MCF 10A (cell line): ENCODE measurements at regions of chr2 and their contacts with region 1.

Region 1: DNA sequence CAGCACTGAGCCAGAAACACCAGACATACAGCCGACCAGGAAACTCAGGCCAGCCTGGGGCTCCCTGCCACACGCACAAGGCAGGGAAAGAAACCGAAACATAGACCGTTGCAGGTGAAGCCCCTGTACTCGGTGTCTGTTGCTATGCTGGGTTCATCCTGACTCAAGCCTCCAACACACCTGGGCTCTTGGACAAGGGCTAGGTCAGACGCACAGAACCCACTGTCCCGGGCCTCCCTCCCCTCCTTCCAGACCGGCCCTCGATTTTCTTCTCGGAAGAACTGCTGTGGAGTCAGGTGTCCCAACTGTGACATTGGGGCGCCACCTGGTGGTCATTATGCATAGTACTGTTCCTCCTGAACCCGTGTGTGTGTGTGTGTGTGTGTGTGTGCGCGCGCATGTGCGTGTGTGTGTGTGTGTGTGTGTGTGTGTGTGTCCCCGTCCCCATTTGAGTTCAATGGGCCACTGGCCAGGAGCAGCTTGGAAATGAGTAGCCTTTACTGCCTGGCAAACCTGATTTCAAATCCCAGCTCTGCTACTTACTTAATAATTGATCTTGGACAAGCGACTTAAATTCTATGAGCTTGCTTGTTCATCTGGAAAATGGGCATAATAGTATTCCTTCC is 55.4 kb upstream of the GLI2 start:
- DNase-seq: peak; percentile 90
- H3K4me3 Mint-ChIP-seq: no peak overlapping the region
- H3K27ac Mint-ChIP-seq: no peak overlapping the region
- H3K4me1 Mint-ChIP-seq: peaks cover 10% of the 10 kb centered on the region
- H3K27me3 Mint-ChIP-seq: no peaks in the 10 kb centered on the region
- CTCF ChIP-seq: peak; percentile 65

Region 2: DNA sequence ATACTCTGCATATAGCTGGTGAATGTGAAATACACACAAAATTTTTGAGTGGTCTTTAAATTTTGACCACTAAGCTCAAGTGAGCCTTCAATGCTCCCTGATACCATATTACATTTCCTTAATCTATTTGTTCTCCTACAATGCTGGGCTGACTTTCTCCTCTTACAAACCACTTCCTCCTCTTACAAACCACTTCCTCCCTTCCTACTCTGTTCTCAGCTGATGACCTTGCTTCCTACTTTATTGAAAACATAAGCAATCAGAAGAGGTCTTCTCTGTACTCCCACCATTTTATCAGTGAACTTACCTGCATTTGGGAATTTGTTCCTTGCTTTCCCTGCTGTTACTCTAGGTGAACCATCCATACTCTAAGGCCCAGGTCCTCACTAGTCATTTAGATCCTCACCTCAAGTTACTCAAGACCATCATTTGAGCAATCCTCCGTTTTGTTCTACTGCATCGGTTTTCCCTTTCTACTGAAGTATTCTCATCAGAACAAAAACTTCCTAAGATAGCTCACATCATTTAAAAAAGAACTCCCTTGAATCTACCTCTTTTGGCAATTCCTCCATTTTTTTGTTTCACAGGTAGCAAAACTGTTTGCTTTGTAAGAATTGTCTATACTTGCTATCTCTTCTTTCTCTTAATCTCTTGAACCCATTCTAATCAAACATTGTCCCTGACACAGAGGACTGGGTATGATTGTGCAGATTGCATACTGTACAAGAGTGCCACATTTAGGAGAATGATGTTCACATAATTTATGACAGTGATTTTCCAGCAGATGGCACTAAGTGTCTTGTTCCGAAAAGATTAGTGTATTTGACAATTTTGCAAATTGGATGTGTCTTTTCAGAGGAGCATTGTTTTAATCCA is 570.8 kb before region 1 on chr2:
- CTCF ChIA-PET with region 1: interaction called, 10 read pairs
- POLR2A ChIA-PET with region 1: interaction called, 3 read pairs
- intact Hi-C with region 1: loop called (anchors 5 kb)
- DNase-seq: peak; percentile 65
- H3K4me3 Mint-ChIP-seq: peak overlapping the region; percentile 34
- H3K27ac Mint-ChIP-seq: peak overlapping the region; percentile 28
- H3K4me1 Mint-ChIP-seq: peaks cover 44% of the 10 kb centered on the region
- H3K27me3 Mint-ChIP-seq: no peaks in the 10 kb centered on the region
- CTCF ChIP-seq: peak; percentile 64

Region 3: DNA sequence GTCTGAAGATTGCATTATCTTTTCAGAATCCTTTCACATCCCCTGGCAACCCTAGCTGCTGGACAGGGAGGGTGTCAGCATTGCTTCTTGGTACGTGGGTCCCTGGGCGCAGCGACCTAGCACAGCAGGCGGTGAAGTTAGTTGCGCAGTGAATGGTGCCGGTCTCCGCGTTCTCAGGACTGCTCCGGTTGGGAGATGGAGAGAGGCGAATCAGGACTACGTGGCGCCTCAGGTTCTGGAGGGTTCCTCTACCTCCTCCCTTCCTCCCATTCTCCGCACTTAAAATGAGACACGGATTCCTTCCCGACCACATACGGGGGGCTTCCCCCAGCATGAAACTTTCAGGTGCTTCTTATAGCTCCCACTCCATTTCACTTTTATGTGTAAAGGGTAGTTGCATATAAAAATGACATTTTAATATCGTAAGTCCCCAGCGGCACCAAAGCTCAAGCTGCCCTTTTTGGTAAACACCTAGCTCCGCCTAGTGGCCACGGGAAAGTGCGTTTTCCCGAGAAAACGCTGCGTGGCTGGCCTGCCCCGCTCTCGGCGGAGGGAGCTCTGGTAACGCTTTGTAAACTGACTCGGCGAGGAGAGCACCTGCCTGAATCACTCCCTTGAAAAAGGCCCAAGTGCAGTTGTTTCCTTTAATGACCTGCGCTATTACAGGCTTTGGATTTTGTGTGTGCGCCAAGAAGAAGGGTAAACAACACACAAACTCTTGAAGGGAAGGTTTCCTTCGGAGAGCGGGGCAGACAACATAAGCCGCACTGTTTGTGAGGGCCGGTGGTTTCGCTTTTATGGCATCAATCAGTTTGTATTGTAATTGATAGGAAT is 367.2 kb before region 1 on chr2:
- CTCF ChIA-PET with region 1: interaction called, 121 read pairs
- POLR2A ChIA-PET with region 1: interaction called, 3 read pairs
- intact Hi-C with region 1: loop called (anchors 10 kb)
- DNase-seq: peak; percentile 78
- H3K4me3 Mint-ChIP-seq: peak overlapping the region; percentile 11
- H3K27ac Mint-ChIP-seq: no peak overlapping the region
- H3K4me1 Mint-ChIP-seq: no peaks in the 10 kb centered on the region
- H3K27me3 Mint-ChIP-seq: no peaks in the 10 kb centered on the region
- CTCF ChIP-seq: peak; percentile 87

Region 4: DNA sequence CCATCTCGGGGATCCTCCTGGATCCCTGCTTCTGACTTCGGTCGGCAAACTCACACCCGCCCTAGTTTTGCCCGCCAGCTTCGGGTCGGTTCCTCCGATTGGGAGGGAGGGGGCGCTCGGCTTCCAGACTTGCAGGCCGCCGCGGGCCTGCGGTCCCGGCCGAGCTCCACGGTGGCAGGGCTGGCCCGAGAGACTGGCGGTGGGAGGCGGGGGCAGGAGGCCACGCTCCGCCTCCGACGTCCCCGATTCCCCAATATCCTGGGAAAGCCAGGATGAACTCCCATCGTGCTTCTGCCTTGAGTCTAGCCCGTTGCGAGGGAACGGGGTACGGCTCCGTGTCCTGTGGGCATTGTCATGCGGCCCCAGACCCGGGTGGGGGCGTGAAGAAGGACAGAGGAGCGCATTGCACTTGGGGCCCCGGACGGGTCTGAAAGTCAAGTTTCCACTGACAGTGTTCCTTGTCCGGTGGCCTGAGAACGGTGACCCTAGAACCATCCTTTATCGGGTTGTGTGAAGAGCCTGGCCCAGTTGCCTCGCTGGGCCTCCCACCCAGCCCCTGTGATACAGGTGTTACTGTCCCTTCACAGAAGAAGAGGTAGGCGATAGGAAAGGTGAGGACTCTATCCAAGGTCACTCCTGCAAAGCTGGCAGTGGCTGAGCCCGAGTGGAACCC is 336.7 kb before region 1 on chr2:
- CTCF ChIA-PET with region 1: interaction called, 14 read pairs
- POLR2A ChIA-PET with region 1: no interaction called
- intact Hi-C with region 1: loop called (anchors 1 kb)
- DNase-seq: peak; percentile 70
- H3K4me3 Mint-ChIP-seq: peak overlapping the region; percentile 4
- H3K27ac Mint-ChIP-seq: no peak overlapping the region
- H3K4me1 Mint-ChIP-seq: peaks cover 6% of the 10 kb centered on the region
- H3K27me3 Mint-ChIP-seq: peaks cover 12% of the 10 kb centered on the region
- CTCF ChIP-seq: peak; percentile 84

Region 5: GRCh38 chr2:120520929-120521912 is 159.0 kb before region 1 on chr2:
- CTCF ChIA-PET with region 1: interaction called, 4 read pairs
- POLR2A ChIA-PET with region 1: no interaction called
- intact Hi-C with region 1: loop called (anchors 5 kb)
- DNase-seq: peak; percentile 68
- H3K4me3 Mint-ChIP-seq: no peak overlapping the region
- H3K27ac Mint-ChIP-seq: no peak overlapping the region
- H3K4me1 Mint-ChIP-seq: peaks cover 8% of the 10 kb centered on the region
- H3K27me3 Mint-ChIP-seq: peaks cover 9% of the 10 kb centered on the region
- CTCF ChIP-seq: peak; percentile 93

Region 6: DNA sequence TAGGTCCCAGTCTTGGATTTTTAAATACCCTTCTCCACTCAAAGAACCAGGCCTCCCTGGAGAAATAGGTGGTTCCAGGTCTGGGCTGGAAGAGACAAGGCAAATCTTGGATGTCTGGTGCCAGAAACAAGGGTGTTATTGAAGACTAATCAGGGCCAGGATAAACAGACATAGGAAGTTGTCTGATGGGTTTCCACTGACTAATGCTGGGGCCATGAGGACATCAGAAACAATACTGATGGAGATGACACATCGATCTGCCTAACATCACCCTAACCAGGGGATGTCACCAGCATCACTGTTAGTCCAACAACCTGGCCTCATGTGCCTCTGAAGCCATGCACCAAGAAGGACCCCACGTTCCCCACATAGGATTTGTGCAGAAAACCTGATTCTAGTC is 12.9 kb after region 1 on chr2:
- CTCF ChIA-PET with region 1: interaction called, 15 read pairs
- POLR2A ChIA-PET with region 1: interaction called, 3 read pairs
- intact Hi-C with region 1: no loop called
- DNase-seq: no peak
- H3K4me3 Mint-ChIP-seq: no peak overlapping the region
- H3K27ac Mint-ChIP-seq: no peak overlapping the region
- H3K4me1 Mint-ChIP-seq: peaks cover 5% of the 10 kb centered on the region
- H3K27me3 Mint-ChIP-seq: peaks cover 29% of the 10 kb centered on the region
- CTCF ChIP-seq: no peak

Region 7: DNA sequence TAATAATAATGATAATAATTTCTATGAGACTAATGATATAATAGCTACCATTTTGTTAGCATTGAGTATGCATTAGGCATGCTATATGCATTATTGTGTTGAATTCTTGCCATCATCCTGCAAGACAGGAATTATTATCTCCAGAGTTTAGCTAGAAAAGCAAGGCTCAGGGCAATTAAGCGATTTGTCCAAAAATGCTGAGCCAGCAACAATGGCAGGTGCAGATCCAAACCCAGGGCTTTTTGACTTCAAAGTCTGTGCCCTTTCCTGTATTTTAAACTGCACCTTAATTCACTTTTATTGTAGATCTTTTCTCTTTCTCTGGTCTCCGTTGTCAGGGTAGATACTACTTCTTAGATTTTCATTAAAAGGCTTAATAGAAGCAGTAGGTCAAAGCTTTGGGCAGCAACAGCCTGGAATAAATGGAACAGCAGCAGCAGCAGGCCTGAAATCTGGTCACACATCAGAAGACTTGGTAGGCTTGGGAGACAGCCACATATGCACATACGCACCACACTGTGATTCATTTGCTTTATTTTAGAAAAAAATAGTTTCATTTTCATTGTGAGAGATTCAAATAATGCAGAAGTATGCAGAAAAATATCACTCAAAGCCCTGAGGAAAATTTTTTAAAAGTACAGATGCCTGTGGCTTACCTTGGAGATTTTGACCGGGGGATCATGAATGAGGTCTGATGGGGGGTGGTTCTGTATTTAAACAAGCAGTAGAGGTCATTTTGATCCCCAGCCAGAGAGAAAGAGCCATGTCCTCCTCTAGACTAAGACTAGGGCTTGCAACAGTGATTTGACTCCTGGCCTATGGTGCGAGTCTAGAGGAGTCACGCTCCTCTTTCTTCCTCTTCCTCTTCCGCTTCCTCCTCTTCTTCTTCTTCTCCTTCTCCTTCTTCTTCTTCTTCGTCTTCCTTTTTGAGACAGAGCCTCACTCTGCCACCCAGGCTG is 1530.9 kb after region 1 on chr2:
- CTCF ChIA-PET with region 1: no interaction called
- POLR2A ChIA-PET with region 1: no interaction called
- intact Hi-C with region 1: no loop called
- DNase-seq: no peak
- H3K4me3 Mint-ChIP-seq: no peak overlapping the region
- H3K27ac Mint-ChIP-seq: no peak overlapping the region
- H3K4me1 Mint-ChIP-seq: no peaks in the 10 kb centered on the region
- H3K27me3 Mint-ChIP-seq: no peaks in the 10 kb centered on the region
- CTCF ChIP-seq: no peak